Activated CD4-positive, alpha-beta T cell treated with anti-CD3 and anti-CD28 coated beads, Interleukin-2, amount 10 ng/mL, durations not matched to agents 24 days and 14 days (primary cell): ENCODE measurements at regions of chr7 and their contacts with region 1.

Region 1: DNA sequence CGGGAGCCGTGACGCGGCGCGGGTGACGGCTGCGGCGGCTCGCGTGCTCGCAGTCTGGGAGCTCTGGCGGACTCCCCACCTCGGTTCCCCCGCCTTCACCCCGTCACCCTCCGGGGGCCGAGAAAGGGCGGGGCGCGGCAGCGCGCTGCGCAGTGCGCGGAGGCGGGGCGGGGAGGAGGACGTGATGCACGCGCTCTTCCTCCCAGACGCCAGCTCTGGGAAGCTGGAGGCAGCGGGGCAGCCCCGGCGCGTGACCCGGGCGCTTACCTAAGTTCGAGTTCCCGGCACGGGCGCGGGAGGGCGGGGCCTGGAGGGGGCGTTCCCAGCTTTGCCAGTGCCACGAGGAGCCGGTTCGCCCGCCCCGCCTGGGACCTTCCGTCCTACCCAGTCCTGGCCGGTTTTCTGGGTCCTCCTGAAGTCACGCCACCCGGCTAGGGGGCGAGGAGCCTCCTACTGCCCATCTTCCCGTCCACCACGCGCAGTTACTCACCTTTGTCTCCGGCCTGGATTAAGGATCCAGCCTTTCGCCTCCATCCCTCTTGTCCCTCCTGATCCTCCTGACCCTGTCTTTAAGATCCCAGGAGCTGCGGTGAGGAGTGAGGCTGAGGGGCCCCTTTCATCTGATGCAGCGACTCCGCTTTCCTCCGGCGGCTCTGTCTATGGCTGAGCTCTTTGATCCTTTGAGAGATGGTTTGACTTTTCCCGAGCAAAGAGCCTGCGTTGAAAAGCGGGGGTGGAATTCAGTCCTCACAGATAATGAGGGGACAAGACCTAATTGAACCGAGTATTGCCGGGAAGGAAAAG is 470 bp upstream of the NAMPT start:
- DNase-seq: peak; percentile 99
- H3K4me3 Mint-ChIP-seq: peak overlapping the region; percentile 93
- H3K27ac Mint-ChIP-seq: peak overlapping the region; percentile 99
- H3K4me1 Mint-ChIP-seq: peaks cover 32% of the 10 kb centered on the region
- H3K27me3 Mint-ChIP-seq: no peaks in the 10 kb centered on the region

Region 2: GRCh38 chr7:106260136-106260561 is 25.1 kb before region 1 on chr7:
- intact Hi-C with region 1: loop called (anchors 2 kb)
- DNase-seq: peak; percentile 73
- H3K4me3 Mint-ChIP-seq: peak overlapping the region; percentile 62
- H3K27ac Mint-ChIP-seq: peak overlapping the region; percentile 78
- H3K4me1 Mint-ChIP-seq: peaks cover 37% of the 10 kb centered on the region
- H3K27me3 Mint-ChIP-seq: no peaks in the 10 kb centered on the region

Region 3: GRCh38 chr7:106425017-106425719 is 139.9 kb after region 1 on chr7:
- intact Hi-C with region 1: loop called (anchors 1 kb)
- DNase-seq: peak; percentile 88
- H3K4me3 Mint-ChIP-seq: peak overlapping the region; percentile 74
- H3K27ac Mint-ChIP-seq: peak overlapping the region; percentile 96
- H3K4me1 Mint-ChIP-seq: peaks cover 74% of the 10 kb centered on the region
- H3K27me3 Mint-ChIP-seq: no peaks in the 10 kb centered on the region

Region 4: GRCh38 chr7:106485031-106485551 is 199.8 kb after region 1 on chr7:
- intact Hi-C with region 1: loop called (anchors 1 kb)
- DNase-seq: peak; percentile 55
- H3K4me3 Mint-ChIP-seq: peak overlapping the region; percentile 11
- H3K27ac Mint-ChIP-seq: peak overlapping the region; percentile 82
- H3K4me1 Mint-ChIP-seq: peaks cover 43% of the 10 kb centered on the region
- H3K27me3 Mint-ChIP-seq: no peaks in the 10 kb centered on the region

Region 5: DNA sequence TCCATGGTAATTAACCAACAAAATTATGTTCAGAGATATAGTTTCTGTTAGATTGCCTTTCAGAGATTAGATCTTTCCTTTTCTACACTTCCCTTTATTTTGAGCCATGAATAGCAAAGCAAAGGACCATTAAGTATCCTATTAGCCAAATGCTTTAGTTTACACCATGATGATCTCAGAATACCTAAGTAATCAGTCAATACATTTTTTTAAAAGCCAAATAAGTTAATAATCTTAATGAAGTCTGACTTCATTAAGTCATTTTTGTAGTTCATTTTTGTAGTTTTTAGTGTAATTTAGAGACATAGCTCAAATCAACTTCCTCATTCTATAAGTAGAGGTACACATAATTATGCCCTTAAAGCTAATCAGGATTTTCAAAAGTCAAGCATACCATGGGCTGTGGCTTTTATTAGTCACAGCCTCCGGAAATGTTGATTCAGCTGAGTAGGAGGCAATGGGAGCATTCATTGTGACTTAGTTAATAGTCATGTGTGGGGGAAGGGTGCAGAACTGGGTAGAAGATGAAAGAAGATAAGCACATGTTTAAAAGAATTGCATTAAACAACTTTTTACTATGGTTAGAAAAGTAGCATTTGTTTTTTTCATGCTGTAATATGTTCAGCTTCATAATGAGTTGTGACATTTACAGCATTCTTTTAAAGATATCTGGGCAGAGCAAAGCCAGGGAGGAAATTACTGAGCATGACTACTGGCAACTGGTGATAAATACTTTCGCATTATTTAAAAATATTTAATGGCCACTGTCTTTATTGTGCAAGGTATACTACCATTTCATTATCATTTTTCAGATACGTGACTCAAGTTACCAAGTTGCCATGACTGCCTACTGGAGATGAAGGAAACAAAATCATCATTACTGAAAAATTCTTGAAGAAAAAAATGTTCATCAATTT is 433.0 kb after region 1 on chr7:
- intact Hi-C with region 1: loop called (anchors 2 kb)
- DNase-seq: peak; percentile 85
- H3K4me3 Mint-ChIP-seq: no peak overlapping the region
- H3K27ac Mint-ChIP-seq: no peak overlapping the region
- H3K4me1 Mint-ChIP-seq: peaks cover 22% of the 10 kb centered on the region
- H3K27me3 Mint-ChIP-seq: no peaks in the 10 kb centered on the region